Esophagus muscularis mucosa (tissue), 4 donors: ENCODE measurements at regions of chr6 and their contacts with region 1.

Region 1: GRCh38 chr6:35727935-35728682 is 8.7 kb upstream of the ARMC12 start:
- DNase-seq: peak; percentile 98
- H3K4me3 ChIP-seq: peak overlapping the region; percentile 57 to 67 (median 60)
- H3K27ac ChIP-seq: peak overlapping the region; percentile 96 to 100 (median 98)
- H3K4me1 ChIP-seq: peaks cover 85 to 98% (median 91%) of the 10 kb centered on the region in 4 donors
- H3K27me3 ChIP-seq: no peaks in the 10 kb centered on the region
- CTCF ChIP-seq: peak in 1 of 3 experiments; percentile 19
- EP300 ChIP-seq: peak; percentile 98
- POLR2A ChIP-seq: peak; percentile 83

Region 2: GRCh38 chr6:35601331-35602132 is 126.6 kb before region 1 on chr6:
- intact Hi-C with region 1: loop called (anchors 5 kb)
- DNase-seq: peak; percentile 94
- H3K4me3 ChIP-seq: peak overlapping the region; percentile 0 to 38 (median 28)
- H3K27ac ChIP-seq: peak overlapping the region; percentile 89 to 98 (median 95)
- H3K4me1 ChIP-seq: peaks cover 68 to 98% (median 95%) of the 10 kb centered on the region in 4 donors
- H3K27me3 ChIP-seq: no peaks in the 10 kb centered on the region
- CTCF ChIP-seq: no peak
- EP300 ChIP-seq: peak; percentile 100
- POLR2A ChIP-seq: no peak

Region 3: GRCh38 chr6:35688581-35689322 is 39.4 kb before region 1 on chr6 and contains the start of gene FKBP5:
- intact Hi-C with region 1: loop called (anchors 1 kb)
- DNase-seq: peak; percentile 98
- H3K4me3 ChIP-seq: peak within 1 kb of the TSS; percentile 87 to 98 (median 93)
- H3K27ac ChIP-seq: peak within 1 kb of the TSS; percentile 99 to 100 (median 99)
- H3K4me1 ChIP-seq: peaks cover 31 to 58% (median 49%) of the 10 kb centered on the region in 4 donors
- H3K27me3 ChIP-seq: no peaks in the 10 kb centered on the region
- CTCF ChIP-seq: no peak
- EP300 ChIP-seq: no peak
- POLR2A ChIP-seq: peak; percentile 89
- total RNA-seq, gene FKBP5: 477 to 689 (median 593) TPM